Thyroid gland (tissue), 4 donors: ENCODE measurements at regions of chr11 and their contacts with region 1.

Region 1: GRCh38 chr11:123033895-123034294 is 28.0 kb downstream of the HSPA8 start:
- DNase-seq: peak in 1 of 2 donors; percentile 8
- H3K4me3 ChIP-seq: no peak overlapping the region
- H3K27ac ChIP-seq: no peak overlapping the region
- H3K4me1 ChIP-seq: no peaks in the 10 kb centered on the region
- H3K27me3 ChIP-seq: no peaks in the 10 kb centered on the region
- CTCF ChIP-seq: peak in 1 of 6 experiments; percentile 15
- POLR2A ChIP-seq: no peak

Region 2: GRCh38 chr11:122796128-122796717 is 237.7 kb before region 1 on chr11:
- intact Hi-C with region 1: loop called (anchors 5 kb)
- DNase-seq: peak; percentile 66 to 71
- H3K4me3 ChIP-seq: no peak overlapping the region
- H3K27ac ChIP-seq: no peak overlapping the region
- H3K4me1 ChIP-seq: no peaks in the 10 kb centered on the region
- H3K27me3 ChIP-seq: no peaks in the 10 kb centered on the region
- CTCF ChIP-seq: peak; percentile 84 to 94 (median 91)
- POLR2A ChIP-seq: no peak